ENCODE measurements at regions of chr1 and their contacts with region 1.

Region 1: GRCh38 chr1:198465201-198466144 is 75.0 kb downstream of the ATP6V1G3 start:
- DNase-seq: no peak
- ATAC-seq: no peak
- H3K4me3 ChIP-seq: no peak overlapping the region
- H3K27ac ChIP-seq: no peak overlapping the region
- H3K4me1 ChIP-seq: no peaks in the 10 kb centered on the region
- H3K27me3 ChIP-seq: no peaks in the 10 kb centered on the region
- CTCF ChIP-seq: peak in 4 of 5 experiments; percentile 29 to 57 (median 39)
- POLR2A ChIP-seq: no peak

Region 2: DNA sequence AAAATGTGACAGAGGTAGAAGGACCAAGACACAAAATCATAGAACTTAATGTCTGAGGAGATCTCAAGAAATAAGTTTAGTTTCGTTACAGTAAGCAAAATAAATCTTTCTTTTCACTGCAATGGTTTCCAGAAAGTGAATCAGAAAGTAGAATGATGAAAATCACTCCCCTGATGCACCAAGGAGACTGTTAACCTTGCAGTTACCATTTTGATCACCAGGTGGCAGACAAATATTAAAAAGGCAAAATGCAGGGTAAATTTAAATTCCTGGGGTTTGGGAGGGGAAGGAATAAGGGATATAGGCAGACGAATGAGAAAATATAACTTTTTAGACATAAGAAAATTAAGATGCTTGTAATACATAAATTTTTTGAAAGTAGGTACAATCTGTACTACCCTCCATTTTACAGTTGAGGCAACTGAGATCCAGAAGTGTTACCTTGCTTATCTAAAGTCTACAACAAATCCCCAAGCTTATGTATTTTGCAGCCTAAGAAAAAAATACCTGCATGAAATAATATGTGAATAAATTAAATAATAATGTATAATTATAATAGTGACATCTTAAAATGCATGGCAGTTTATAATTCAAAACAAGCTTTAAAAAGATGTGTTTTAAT is 944.2 kb before region 1 on chr1:
- in situ Hi-C with region 1: no loop called
- intact Hi-C with region 1: loop called (anchors 5 kb)
- DNase-seq: no peak
- ATAC-seq: no peak
- H3K4me3 ChIP-seq: no peak overlapping the region
- H3K27ac ChIP-seq: no peak overlapping the region
- H3K4me1 ChIP-seq: no peaks in the 10 kb centered on the region
- H3K27me3 ChIP-seq: no peaks in the 10 kb centered on the region
- CTCF ChIP-seq: peak in 2 of 5 experiments; percentile 23 to 48
- POLR2A ChIP-seq: no peak

Region 3: GRCh38 chr1:197614916-197615692 is 850.4 kb before region 1 on chr1:
- in situ Hi-C with region 1: no loop called
- intact Hi-C with region 1: loop called (anchors 10 kb)
- DNase-seq: no peak
- ATAC-seq: peak; percentile 52 to 69
- H3K4me3 ChIP-seq: no peak overlapping the region
- H3K27ac ChIP-seq: no peak overlapping the region
- H3K4me1 ChIP-seq: peaks cover 8 to 20% of the 10 kb centered on the region in 2 donors
- H3K27me3 ChIP-seq: no peaks in the 10 kb centered on the region
- CTCF ChIP-seq: peak; percentile 10 to 61 (median 44)
- POLR2A ChIP-seq: no peak

Region 4: GRCh38 chr1:198088360-198089071 is 377.0 kb before region 1 on chr1:
- in situ Hi-C with region 1: loop called in 3 of 4 experiments (anchors 10 to 25 kb)
- intact Hi-C with region 1: no loop called
- DNase-seq: no peak
- ATAC-seq: no peak
- H3K4me3 ChIP-seq: no peak overlapping the region
- H3K27ac ChIP-seq: no peak overlapping the region
- H3K4me1 ChIP-seq: no peaks in the 10 kb centered on the region
- H3K27me3 ChIP-seq: no peaks in the 10 kb centered on the region
- CTCF ChIP-seq: peak; percentile 23 to 61 (median 47)
- POLR2A ChIP-seq: no peak

Region 5: DNA sequence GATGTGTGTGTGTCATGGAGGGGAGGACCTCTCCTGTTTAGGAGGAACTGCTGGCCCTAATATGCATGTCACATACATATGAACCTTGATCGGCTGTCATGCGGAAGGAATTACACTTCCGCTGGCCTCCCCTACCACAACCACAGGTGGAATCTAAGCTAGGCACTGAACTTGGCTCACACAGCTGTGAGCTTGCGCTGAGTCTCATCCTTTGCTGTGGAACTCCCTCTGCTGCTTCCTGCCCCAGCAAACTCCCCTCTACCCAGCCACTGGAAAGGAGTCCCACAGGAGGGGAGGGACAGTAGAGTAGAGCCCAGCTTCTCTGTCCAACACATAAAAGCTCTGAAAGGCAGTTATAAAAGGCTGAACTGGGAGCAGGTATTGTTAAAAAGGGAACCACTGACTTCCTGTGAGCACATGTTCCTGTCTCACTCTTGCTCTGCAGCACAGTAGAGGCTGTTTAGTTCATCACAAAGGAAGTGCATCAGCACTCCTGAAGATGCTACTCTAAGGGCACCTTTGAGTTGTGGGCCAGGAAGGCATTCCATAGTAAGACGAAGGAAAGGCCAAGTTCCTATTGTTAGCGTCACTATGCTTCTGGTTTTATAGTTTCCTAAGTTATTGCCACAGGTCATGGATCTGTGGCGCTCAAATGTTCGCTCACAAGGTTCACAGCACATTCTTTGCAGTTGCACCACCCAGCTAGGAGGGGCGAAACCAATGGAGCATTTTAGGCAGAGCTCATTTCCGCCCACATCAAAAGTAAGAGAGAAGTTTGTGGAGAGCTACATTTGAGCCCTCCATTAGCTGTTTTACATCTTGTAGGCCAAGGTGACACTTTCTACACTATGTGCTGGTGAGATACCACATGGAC is 155.7 kb after region 1 on chr1:
- in situ Hi-C with region 1: no loop called
- intact Hi-C with region 1: no loop called
- DNase-seq: no peak
- ATAC-seq: no peak
- H3K4me3 ChIP-seq: no peak overlapping the region
- H3K27ac ChIP-seq: no peak overlapping the region
- H3K4me1 ChIP-seq: no peaks in the 10 kb centered on the region
- H3K27me3 ChIP-seq: no peaks in the 10 kb centered on the region
- CTCF ChIP-seq: no peak
- POLR2A ChIP-seq: no peak